Activated B cell treated with CpG ODN at 0.5 μM for 24 hours (primary cell): ENCODE measurements at regions of chr16 and their contacts with region 1.

Region 1: DNA sequence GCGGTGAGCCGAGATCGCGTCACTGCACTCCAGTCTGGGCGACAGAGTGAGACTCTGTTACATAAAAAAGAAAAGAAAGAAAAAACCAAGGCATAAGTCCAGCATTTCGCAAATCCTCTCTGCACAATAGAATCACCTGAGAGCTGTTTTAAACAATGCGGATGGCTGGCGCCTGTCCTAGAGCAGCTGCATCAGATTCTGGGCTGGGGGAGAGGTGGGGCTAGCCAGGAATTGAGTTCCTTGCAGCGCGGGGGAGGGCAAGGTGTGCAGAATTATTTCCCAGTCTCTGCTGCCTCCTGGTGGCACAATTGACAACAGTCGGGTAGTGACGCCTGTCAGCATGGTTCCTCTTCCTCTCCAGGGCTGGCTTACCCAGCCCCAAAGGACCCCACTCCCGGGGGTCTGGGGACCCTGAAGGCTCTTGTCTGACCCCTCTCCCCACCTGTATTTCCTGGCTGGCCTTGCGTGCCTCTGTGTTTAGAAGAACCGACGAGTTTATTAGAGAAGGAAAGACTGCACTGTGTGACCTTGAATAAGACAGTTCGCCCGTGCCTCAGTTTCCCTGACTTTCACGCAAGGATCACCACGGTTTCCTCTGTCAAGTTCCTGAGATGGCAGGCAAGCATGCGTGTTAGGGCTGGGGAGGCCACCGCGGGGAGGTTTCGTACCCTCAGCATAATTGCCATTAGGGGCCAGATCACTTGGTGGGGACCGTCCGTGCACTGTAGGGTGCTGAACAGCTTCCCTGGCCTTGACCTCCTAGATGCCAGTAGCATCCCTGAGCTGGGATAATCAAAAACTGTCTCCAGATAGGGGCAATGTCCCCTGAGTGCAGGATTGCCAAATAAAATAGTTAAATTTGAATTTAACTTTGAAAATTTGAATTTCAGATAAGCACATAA is 41.0 kb upstream of the PLCG2 start:
- DNase-seq: peak; percentile 75
- ATAC-seq: peak; percentile 58
- H3K4me3 Mint-ChIP-seq: peak overlapping the region; percentile 79
- H3K27ac Mint-ChIP-seq: peak overlapping the region; percentile 95
- H3K4me1 Mint-ChIP-seq: peaks cover 53% of the 10 kb centered on the region
- H3K27me3 Mint-ChIP-seq: no peaks in the 10 kb centered on the region
- CTCF ChIP-seq: no peak

Region 2: GRCh38 chr16:81035398-81035974 is 702.6 kb before region 1 on chr16 and contains the start of gene ATMIN:
- CTCF ChIA-PET with region 1: interaction called, 4 read pairs
- POLR2A ChIA-PET with region 1: no interaction called
- intact Hi-C with region 1: loop called (anchors 1 kb)
- DNase-seq: peak; percentile 92
- ATAC-seq: peak; percentile 97
- H3K4me3 Mint-ChIP-seq: peak within 1 kb of the TSS; percentile 79
- H3K27ac Mint-ChIP-seq: peak within 1 kb of the TSS; percentile 30
- H3K4me1 Mint-ChIP-seq: peaks cover 22% of the 10 kb centered on the region
- H3K27me3 Mint-ChIP-seq: no peaks in the 10 kb centered on the region
- CTCF ChIP-seq: peak; percentile 90
- total RNA-seq, gene ATMIN: 30.6 and 31.0 TPM in 2 replicates

Region 3: DNA sequence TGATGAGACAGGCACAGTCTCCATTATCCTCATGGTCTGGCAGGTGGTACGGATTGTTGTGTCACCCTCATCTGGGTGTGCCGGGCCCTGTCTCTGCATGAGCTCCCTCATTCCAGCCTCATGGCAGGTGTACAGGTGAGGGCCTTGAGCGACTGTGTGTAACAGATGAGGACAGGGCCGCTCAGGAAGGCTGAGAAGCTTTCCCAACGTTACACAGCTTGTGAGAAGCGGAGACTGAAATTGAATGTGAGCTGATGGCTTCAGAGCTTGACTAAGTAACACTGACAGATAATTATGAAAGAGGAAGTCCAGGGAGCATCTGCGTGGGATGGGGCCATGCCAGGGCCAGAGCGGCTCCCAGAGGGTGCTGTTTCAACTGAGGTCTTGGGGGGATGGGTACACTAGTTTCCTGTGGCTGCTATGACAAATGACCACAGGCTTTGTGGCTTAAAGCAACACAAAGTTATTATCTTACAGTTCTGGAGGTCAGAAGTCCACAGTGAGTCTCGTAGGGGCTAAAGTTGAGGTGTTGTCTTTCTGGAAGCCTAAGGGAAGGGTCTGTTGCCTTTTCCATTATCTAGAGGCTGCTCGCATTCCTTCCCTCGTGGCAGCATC is 256.8 kb before region 1 on chr16:
- CTCF ChIA-PET with region 1: no interaction called
- POLR2A ChIA-PET with region 1: interaction called, 4 read pairs
- intact Hi-C with region 1: loop called (anchors 2 kb)
- DNase-seq: peak; percentile 58
- ATAC-seq: peak; percentile 84
- H3K4me3 Mint-ChIP-seq: peak overlapping the region; percentile 79
- H3K27ac Mint-ChIP-seq: peak overlapping the region; percentile 93
- H3K4me1 Mint-ChIP-seq: peaks cover 90% of the 10 kb centered on the region
- H3K27me3 Mint-ChIP-seq: no peaks in the 10 kb centered on the region
- CTCF ChIP-seq: no peak

Region 4: DNA sequence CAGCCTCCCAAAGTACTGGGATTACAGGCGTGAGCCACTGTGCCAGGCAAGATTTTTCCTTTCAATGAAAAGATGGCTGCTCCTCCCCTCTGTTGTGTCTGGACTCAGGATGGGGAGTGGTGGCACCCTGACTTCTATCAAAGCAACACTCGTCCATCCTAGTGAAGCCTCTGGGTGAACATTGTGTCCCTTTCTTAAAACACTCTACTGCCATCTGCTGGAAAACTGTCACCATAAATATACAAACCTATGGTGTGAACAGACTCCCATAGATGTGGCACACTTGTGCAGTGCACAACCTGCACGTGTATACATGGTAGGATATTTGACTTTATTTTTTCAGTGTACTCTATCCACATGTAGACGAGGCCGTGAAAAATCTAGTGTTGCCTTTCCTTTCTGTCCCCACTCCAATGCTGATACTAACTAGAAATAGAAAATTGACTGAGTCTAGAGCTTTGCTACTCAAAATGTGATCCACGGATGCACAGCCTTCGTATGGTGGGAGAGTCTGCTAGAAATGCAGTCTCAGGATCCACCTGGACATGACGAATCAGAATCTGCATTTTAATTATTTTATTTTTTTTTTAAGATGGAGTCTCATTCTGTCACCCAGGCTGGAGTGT is 14.9 kb before region 1 on chr16:
- CTCF ChIA-PET with region 1: interaction called, 5 read pairs
- POLR2A ChIA-PET with region 1: no interaction called
- intact Hi-C with region 1: loop called (anchors 2 kb)
- DNase-seq: no peak
- ATAC-seq: peak; percentile 92
- H3K4me3 Mint-ChIP-seq: no peak overlapping the region
- H3K27ac Mint-ChIP-seq: no peak overlapping the region
- H3K4me1 Mint-ChIP-seq: peaks cover 22% of the 10 kb centered on the region
- H3K27me3 Mint-ChIP-seq: peaks cover 1% of the 10 kb centered on the region
- CTCF ChIP-seq: no peak

Region 5: GRCh38 chr16:81808933-81809496 is 70.9 kb after region 1 on chr16:
- CTCF ChIA-PET with region 1: interaction called, 5 read pairs
- POLR2A ChIA-PET with region 1: interaction called, 29 read pairs
- intact Hi-C with region 1: no loop called
- DNase-seq: peak; percentile 56
- ATAC-seq: peak; percentile 79
- H3K4me3 Mint-ChIP-seq: peak overlapping the region; percentile 65
- H3K27ac Mint-ChIP-seq: peak overlapping the region; percentile 92
- H3K4me1 Mint-ChIP-seq: peaks cover 98% of the 10 kb centered on the region
- H3K27me3 Mint-ChIP-seq: no peaks in the 10 kb centered on the region
- CTCF ChIP-seq: no peak

Region 6: GRCh38 chr16:81873843-81874752 is 136.0 kb after region 1 on chr16:
- CTCF ChIA-PET with region 1: interaction called, 56 read pairs
- POLR2A ChIA-PET with region 1: interaction called, 16 read pairs
- intact Hi-C with region 1: loop called (anchors 1 kb)
- DNase-seq: peak; percentile 45
- ATAC-seq: peak; percentile 91
- H3K4me3 Mint-ChIP-seq: no peak overlapping the region
- H3K27ac Mint-ChIP-seq: peak overlapping the region; percentile 66
- H3K4me1 Mint-ChIP-seq: peaks cover 41% of the 10 kb centered on the region
- H3K27me3 Mint-ChIP-seq: no peaks in the 10 kb centered on the region
- CTCF ChIP-seq: no peak

Region 7: GRCh38 chr16:82801361-82801760 is 1063.2 kb after region 1 on chr16:
- CTCF ChIA-PET with region 1: no interaction called
- POLR2A ChIA-PET with region 1: no interaction called
- intact Hi-C with region 1: no loop called
- DNase-seq: no peak
- ATAC-seq: no peak
- H3K4me3 Mint-ChIP-seq: no peak overlapping the region
- H3K27ac Mint-ChIP-seq: no peak overlapping the region
- H3K4me1 Mint-ChIP-seq: no peaks in the 10 kb centered on the region
- H3K27me3 Mint-ChIP-seq: peaks cover 2% of the 10 kb centered on the region
- CTCF ChIP-seq: no peak